ENCODE measurements at regions of chr13 and their contacts with region 1.

Region 1: DNA sequence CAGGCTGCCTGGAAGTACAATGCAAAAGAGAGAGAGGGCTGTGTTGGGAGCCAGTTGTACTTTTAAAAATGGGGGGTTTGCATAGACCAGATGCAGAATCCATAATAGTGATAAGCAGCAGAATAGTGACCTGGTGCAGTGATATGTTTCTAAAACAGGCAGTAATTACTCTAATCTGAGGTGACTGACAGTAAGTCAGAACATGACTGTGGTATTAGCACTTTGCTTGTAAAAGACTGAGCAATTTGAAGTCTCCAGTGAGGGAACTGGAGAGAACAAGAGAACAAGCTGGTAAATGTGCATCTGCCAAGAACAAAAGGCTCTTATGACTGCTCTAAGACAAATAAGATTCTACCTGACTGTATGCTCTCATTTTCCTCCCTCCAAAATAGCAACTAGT is 383.4 kb downstream of the ITGBL1 start:
- DNase-seq: no peak
- ATAC-seq: no peak

Region 2: DNA sequence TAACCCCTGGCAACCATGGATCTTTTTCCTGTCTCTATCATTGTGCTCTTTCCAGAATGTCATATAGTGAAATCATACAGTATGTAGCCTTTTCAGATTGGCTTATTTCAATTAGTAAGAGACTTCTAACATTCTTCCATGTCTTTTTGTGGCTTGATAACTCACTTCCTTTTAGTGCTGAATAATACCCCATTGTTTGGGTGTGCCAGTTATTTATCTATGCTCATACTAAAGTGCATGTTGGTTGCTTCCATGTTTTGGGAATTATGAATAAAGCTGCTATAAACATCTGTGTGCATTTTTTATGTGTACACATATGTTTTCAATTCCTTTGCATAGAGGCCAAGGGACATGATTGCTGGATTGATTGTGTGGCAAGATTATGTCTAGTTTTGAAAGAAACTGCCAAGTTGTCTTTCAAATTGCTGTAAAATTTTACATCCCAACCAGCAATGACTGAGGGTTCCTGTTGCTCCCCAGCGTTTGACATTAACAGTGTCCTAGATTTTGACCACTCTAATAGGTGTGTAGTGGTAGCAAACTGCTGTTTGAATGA is 24.6 kb before region 1 on chr13:
- intact Hi-C with region 1: loop called (anchors 2 kb)
- DNase-seq: no peak
- ATAC-seq: no peak

Region 3: GRCh38 chr13:101875717-101876393 is 39.9 kb after region 1 on chr13:
- intact Hi-C with region 1: no loop called
- DNase-seq: no peak
- ATAC-seq: no peak

Measured in Right ventricle myocardium inferior (tissue), 1 donor.